ENCODE measurements at regions of chr16 and their contacts with region 1.

Region 1: GRCh38 chr16:78122774-78123315 is 23.4 kb downstream of the WWOX start:
- DNase-seq: peak in 1 of 3 donors; percentile 66
- ATAC-seq: peak; percentile 79 to 86
- H3K4me3 ChIP-seq: no peak overlapping the region
- H3K27ac ChIP-seq: peak overlapping the region; percentile 37
- H3K4me1 ChIP-seq: no peaks in the 10 kb centered on the region
- H3K27me3 ChIP-seq: no peaks in the 10 kb centered on the region

Region 2: DNA sequence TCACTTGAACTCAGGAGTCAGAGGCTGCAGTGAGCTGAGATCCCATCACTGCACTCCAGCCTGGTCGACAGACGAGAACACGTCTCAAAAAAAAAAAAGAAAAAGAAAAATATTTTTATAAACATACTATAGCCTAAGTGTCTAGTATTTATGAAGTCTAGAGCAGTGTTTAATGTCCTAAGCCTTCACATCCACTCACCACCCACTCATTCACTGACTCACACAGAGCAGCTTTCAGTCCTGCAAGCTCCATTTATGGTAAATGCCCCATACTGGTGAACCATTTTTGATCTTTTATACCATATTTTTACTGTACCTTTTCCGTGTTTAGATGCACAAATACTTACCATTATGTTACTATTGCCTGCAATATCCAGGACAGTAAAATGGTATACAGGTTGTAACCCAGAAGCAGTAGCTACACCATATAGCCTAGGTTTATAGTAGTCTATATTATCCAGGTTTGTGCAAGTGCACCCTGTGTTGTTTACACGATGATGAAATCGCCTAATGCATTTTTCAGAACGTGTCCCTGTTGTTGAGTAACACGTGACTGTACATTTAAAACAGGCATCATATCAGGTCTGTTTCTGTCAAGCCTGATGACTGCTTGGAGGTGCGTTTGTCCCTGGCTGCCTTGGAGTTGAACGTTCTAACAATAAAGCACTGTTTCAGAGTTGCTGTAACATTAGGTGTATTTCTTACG is 390.5 kb before region 1 on chr16:
- intact Hi-C with region 1: no loop called
- DNase-seq: no peak
- ATAC-seq: no peak
- H3K4me3 ChIP-seq: no peak overlapping the region
- H3K27ac ChIP-seq: no peak overlapping the region
- H3K4me1 ChIP-seq: no peaks in the 10 kb centered on the region
- H3K27me3 ChIP-seq: no peaks in the 10 kb centered on the region

Region 3: DNA sequence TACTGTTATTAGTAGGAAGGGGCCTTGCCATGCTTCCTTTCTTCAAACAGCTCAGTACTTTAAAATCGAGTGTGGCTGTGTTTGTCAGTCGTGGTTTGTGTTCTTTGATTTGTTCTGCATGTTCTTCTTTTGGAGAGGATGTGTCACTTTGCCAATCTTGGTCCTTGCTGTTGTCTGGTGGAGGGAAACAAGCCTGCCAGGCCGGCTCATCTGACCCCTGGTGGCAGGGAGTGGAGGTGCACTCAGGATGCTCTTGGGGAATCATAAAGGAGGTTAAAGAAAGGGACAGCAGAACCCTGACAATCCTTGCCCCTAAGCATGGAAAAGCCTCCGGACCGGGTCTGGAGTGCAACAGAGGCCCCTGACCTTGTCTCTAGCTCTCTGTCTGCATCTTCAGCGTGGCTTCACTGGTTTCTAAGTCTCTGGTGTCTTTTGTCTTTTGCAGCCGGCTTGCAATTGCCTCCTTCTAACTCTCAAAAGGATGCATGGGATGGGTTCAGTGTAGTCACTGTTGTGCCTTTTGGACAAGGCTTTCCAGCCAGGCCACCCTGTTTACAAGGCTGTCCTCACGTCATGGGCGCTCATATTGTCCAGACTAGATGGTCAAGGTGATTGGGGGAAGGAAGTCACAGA is 112.4 kb after region 1 on chr16:
- intact Hi-C with region 1: loop called (anchors 5 to 10 kb)
- DNase-seq: peak; percentile 51 to 84 (median 79)
- ATAC-seq: peak; percentile 75 to 80
- H3K4me3 ChIP-seq: no peak overlapping the region
- H3K27ac ChIP-seq: no peak overlapping the region
- H3K4me1 ChIP-seq: peaks cover 2% of the 10 kb centered on the region
- H3K27me3 ChIP-seq: no peaks in the 10 kb centered on the region

Region 4: DNA sequence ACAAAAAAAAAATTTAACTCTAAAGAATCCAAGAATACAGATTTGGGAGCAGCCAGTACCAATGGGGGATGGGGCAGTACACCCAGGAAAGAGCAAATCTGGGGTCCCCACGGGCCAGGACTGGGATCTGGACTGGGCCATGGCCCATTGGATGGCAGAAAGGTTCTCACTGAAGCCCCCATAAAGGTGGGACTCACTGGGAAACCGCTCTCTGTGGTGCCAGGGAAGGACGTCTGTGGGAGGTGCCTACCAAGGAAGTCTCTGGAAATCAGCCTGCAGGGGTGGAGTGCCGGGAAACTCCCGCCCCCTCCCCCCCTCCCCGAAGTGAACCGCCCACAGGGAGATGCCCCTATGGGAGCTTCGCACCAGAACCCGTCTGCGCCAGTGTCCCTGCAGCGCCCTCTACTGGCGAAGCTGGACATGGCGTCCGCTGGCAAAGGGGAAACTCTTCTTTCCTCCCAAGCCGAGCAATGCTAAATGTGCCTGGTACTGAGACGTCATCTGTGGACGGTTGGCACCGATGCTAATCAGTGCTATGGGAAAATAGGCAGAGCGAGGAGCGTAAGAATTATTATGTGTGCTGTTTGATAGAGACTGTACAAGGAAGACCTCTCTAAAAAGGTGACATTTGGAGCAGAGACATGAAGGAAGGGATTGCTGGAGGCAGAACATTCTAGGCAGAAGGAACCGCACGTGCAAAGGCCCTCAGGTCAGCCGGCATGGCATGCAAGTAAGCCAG is 647.7 kb after region 1 on chr16:
- intact Hi-C with region 1: loop called in 1 of 4 experiments (anchors 10 kb)
- DNase-seq: peak; percentile 75 to 92 (median 90)
- ATAC-seq: peak; percentile 69 to 92
- H3K4me3 ChIP-seq: no peak overlapping the region
- H3K27ac ChIP-seq: no peak overlapping the region
- H3K4me1 ChIP-seq: no peaks in the 10 kb centered on the region
- H3K27me3 ChIP-seq: no peaks in the 10 kb centered on the region

Measured in right cardiac atrium (tissue), 5 donors.